ENCODE measurements at regions of chr16 and their contacts with region 1.

Region 1: GRCh38 chr16:74726716-74727115 is 26.1 kb upstream of the MLKL start:
- DNase-seq: no peak
- H3K4me3 ChIP-seq: no peak overlapping the region
- H3K27ac ChIP-seq: no peak overlapping the region
- H3K4me1 ChIP-seq: peaks cover 6% of the 10 kb centered on the region
- H3K27me3 ChIP-seq: no peaks in the 10 kb centered on the region
- CTCF ChIP-seq: no peak
- EP300 ChIP-seq: no peak
- POLR2A ChIP-seq: no peak

Region 2: DNA sequence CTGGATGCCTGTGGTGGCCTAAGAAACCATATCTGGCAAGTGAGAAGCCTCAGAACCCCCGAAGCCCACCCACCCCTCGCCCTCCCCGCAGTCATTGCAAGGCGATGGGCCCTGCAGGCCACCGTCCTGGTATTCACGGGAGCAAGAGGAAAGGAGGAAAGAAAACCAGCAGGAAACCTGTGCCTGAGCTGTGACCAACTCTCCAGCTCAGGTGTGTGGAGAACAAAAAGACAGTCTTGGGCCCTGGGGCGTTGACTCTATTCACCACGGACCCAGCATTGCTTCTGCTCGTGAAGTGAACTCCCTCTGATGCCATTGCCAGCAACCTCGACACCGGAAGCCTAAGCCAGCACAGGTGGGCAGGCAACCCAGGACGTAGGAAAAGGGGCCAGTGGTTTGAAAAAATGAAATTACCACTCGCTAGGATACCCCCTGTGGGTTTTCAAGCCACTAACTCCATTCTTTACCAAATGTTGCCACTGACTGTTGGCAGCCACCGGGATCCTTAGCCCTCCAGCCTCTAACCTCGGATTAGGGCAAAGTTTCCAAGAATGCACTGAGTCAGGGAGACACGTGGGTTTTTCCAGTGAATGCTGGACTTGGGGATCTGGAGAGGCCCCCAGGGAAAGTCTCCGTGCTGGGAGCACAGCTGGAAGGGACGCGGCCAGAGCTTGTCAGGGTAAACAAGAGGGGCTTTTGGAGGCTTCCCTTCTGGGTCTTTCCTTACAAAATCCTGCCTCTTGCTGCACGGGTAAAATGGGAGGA is 22.8 kb after region 1 on chr16:
- intact Hi-C with region 1: loop called in 1 of 4 experiments (anchors 1 kb)
- DNase-seq: no peak
- H3K4me3 ChIP-seq: no peak overlapping the region
- H3K27ac ChIP-seq: no peak overlapping the region
- H3K4me1 ChIP-seq: no peaks in the 10 kb centered on the region
- H3K27me3 ChIP-seq: no peaks in the 10 kb centered on the region
- CTCF ChIP-seq: no peak
- EP300 ChIP-seq: no peak
- POLR2A ChIP-seq: no peak